Left ventricle myocardium superior (tissue), 1 donor: ENCODE measurements at regions of chr11 and their contacts with region 1.

Region 1: DNA sequence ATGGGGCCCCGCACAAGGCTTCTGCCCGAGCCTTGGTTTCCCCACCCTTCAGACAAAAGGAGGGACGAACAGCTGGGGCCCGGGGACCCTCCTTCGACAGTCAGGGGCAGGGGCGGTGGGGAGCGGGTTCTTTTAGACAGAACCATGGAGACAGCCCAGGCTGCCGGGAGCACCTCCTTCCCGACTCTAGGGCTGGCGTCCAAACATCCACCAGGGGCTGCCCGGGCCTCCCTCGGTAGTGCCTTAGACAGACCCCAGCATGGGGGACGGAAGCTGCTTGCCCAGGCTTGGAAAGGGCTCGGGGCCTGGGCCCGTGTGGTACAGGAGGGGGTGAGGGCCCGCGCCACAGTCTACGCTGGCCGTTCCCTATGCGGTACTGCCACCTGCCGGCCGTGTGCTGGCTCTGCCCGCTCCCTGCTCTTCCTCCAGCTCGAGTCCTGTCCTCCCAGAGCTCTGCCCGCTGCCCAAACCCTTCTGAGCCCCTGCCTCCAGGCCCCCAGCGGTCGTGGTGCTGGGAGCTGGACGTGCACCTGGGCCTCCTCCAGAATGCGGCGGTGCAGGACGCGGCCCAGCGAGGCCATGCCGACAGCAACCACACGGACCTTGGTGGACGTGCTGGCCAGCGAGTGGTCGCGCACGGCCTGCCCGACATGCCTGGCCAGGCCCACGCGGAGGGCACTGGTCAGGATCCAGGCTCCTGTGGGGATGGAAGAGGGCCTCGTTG is 20.1 kb downstream of the TSSC4 start:
- DNase-seq: peak; percentile 87
- ATAC-seq: peak; percentile 96

Region 2: DNA sequence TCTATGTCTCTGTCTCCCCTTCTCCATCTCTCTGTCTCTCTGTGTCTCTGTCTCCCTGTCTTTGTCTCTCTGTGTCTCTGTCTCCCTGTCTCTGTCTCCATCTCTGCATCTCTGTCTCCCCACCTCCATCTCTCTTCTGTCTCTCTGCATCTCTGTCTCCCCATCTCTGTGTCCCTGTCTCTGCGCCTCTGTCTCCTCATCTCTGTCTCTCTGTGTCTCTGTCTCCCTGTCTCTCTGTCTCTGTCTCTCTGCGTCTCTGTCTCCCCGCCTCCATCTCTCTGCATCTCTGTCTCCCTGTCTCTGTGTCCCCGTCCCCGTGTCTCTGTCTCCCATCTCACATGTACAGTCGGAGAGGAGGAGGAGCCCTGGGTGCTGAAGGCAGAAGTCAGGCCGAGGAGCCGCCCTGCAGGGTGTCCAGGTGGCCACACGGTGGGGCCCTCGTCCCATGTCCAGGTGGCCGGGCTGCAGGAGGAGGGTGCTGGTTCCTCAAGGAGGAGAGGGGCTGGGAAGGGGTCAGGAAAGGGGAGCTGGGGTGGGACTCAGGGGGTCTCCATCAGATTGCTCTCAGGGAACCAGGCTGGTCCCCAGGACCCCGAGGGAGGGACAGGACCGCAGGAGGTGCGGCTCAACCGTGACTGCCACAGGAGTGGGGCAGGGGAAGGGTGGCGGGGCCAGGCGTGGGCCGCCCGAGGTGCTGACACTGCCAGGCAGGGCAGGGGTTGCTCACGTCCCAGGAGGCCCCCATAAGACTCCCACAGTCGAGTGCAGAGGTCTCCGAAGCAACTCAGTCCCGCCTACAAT is 223.5 kb before region 1 on chr11:
- intact Hi-C with region 1: loop called (anchors 10 kb)
- DNase-seq: peak; percentile 84
- ATAC-seq: peak; percentile 75

Region 3: GRCh38 chr11:2305140-2305840 is 115.4 kb before region 1 on chr11:
- intact Hi-C with region 1: loop called (anchors 2 kb)
- DNase-seq: peak; percentile 94
- ATAC-seq: peak; percentile 27